ENCODE measurements at regions of chr2 and their contacts with region 1.

Region 1: DNA sequence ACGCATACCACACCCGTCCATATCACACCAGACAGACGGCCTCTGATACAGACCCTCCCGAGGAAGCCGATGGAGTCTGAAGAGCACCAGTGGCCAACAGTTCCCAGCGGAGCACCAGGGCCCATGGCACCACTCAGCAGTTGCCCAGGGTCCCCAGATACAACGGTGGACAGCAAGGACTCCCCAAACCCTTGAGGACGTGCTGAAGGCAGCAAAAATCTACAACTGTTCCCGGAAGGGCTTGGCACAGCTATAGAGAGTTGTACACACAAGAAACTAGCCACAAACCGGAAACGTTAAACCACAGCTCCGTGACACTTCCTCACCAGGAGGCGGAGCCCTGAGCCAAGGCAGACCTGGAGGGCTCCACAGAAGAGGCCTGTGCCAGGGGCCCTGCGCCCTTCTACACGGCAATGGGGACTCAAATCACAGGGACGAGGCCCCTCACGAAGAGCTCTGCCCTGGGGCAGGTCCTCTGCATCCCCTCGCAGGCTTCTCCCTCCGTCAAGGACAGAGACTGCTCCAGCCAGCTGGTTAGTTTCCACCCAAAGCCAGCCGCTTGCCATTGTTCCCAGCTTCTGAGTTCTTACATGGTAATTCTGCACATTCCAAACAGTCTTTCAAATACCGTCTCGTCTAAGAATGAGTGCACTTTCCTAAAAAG is 133.4 kb downstream of the HDAC4 start:
- DNase-seq: peak; percentile 98
- H3K4me3 Mint-ChIP-seq: peak overlapping the region; percentile 93
- H3K27ac Mint-ChIP-seq: peak overlapping the region; percentile 84
- H3K4me1 Mint-ChIP-seq: peaks cover 76% of the 10 kb centered on the region
- H3K27me3 Mint-ChIP-seq: peaks cover 12% of the 10 kb centered on the region

Region 2: GRCh38 chr2:239143858-239144718 is 123.3 kb before region 1 on chr2:
- intact Hi-C with region 1: loop called (anchors 5 kb)
- DNase-seq: peak; percentile 68
- H3K4me3 Mint-ChIP-seq: no peak overlapping the region
- H3K27ac Mint-ChIP-seq: no peak overlapping the region
- H3K4me1 Mint-ChIP-seq: peaks cover 5% of the 10 kb centered on the region
- H3K27me3 Mint-ChIP-seq: no peaks in the 10 kb centered on the region

Region 3: DNA sequence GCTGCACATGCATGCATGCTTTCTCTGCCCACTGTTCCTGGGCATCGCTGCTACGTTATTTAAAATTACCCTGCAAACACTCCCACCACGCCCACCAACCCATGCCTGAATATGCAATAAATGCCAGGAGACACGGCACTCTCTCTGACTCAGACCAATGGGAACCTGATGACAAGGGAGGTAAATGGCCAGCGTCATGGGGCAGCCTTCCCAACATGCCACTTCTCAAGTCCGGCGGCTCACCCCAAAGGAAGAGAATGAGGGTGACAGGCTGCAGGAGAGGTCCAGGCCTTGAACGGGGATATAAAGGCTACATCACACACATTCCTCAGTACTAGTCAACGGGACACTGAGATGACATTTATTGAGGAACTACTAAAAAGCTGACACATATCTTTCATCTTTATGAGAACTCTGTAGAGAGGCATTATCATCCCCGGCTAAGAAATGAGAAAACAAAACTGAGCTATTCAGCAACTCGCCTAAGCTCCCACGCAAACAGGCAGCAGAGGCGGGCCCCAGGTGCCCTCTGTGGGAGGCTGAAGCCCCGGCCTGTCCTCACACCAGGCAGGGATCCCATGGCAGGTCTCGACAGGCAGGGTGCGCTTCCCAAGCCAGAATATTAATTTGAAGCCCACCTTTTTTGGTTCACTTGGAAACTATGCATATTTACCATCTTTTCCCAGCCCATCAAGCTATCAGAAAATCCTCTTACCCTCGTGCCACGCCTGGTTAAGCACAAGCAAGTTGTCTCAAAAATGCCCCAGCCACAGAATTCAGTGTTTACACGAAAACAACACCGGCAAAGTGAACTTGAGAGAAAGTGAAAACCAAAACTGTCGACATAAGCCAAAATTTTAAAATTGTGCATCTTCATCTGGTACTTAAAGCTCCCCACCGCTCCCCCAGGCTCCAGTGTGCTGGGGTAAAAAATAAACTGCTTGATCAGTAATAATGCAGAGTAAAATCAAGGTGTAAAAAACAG is 32.9 kb before region 1 on chr2:
- intact Hi-C with region 1: loop called (anchors 2 kb)
- DNase-seq: no peak
- H3K4me3 Mint-ChIP-seq: no peak overlapping the region
- H3K27ac Mint-ChIP-seq: no peak overlapping the region
- H3K4me1 Mint-ChIP-seq: peaks cover 33% of the 10 kb centered on the region
- H3K27me3 Mint-ChIP-seq: no peaks in the 10 kb centered on the region

Region 4: GRCh38 chr2:239369631-239370161 is 102.3 kb after region 1 on chr2:
- intact Hi-C with region 1: no loop called
- DNase-seq: peak; percentile 95
- H3K4me3 Mint-ChIP-seq: no peak overlapping the region
- H3K27ac Mint-ChIP-seq: no peak overlapping the region
- H3K4me1 Mint-ChIP-seq: peaks cover 11% of the 10 kb centered on the region
- H3K27me3 Mint-ChIP-seq: no peaks in the 10 kb centered on the region